ENCODE measurements at regions of chr10 and their contacts with region 1.

Region 1: DNA sequence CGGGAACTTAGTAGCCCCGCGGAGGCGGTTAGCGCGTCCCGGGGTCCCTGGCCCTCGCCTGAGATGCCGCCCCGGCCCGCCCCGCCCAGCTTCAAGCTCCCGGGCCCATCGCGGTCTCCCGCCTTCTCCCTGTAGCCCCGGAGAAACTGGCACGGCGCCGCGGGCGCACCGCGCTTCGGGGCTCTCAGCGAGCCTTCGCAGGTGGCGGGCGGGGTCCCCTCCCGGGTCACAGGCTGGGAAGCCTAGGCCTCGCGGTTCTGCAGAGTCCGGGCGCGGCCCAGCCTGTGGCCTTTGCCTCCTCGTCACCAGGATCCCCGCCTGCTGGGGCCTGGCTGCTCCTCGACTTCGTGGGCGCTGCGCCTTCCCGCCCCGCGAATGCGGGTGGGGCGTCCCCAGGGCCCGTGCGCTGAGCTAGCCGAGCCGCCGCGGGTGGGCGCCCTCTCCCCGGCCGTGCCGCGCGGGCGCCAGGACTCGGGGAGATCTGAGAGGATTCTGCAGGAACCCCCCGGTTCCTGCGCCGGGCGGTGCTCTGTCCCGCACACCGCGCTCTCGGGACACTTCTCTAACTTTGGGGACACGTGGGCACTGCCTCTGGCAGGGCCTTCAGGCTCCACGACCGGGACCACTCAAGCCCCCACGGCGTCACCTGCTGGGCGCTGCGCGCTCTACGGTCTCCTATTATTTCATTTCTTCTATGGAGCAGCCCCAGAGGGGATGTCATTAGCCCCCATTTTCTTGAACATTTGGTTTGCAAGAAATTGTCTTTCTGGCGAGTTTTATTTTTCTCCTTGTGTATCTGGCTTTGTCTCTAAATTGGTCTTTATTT is 682 bp upstream of the RGS10 start:
- DNase-seq: peak; percentile 60 to 67 (median 64)
- H3K4me3 ChIP-seq: peak overlapping the region in 1 of 2 donors; percentile 88
- H3K4me3 Mint-ChIP-seq: peak overlapping the region; percentile 94 to 98 (median 95)
- H3K27ac ChIP-seq: peak overlapping the region; percentile 57
- H3K27ac Mint-ChIP-seq: peak overlapping the region; percentile 83 to 96 (median 91)
- H3K4me1 ChIP-seq: peaks cover 42% of the 10 kb centered on the region
- H3K4me1 Mint-ChIP-seq: peaks cover 28 to 43% (median 38%) of the 10 kb centered on the region in 4 donors
- H3K27me3 ChIP-seq: no peaks in the 10 kb centered on the region
- H3K27me3 Mint-ChIP-seq: no peaks in the 10 kb centered on the region

Region 2: DNA sequence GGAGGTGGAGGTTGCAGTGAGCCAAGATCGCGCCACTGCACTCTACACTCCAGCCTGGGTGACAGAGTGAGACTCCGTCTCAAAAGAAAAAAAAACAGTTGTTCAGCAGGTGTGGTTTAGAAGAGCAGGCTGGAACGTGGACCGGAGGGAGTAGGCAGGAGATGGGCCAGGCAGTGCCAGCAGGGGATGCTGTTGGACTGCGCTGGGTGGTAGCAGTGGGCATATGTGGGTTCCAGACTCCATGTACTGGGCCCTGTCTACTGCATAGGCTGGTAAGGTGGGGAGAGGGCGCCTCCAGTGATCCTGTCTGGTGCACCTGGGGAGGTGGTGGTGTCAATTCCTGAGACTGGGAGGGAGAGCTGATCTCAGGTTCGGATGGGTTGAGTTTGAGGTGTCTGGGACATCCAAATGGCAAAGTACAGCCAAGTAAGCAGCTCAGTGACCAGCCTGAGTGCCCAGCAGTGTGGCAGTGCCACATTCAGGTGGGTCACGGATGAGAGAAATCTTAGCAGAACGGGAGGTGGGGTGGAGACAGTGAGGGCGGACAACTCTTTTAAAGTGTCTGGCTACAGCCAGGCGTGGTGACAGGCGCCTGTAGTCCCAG is 403.6 kb before region 1 on chr10:
- CTCF ChIA-PET with region 1: interaction called, 4 read pairs
- POLR2A ChIA-PET with region 1: no interaction called
- intact Hi-C with region 1: loop called (anchors 2 kb)
- DNase-seq: peak in 4 of 5 donors; percentile 34 to 45 (median 42)
- H3K4me3 ChIP-seq: no peak overlapping the region
- H3K4me3 Mint-ChIP-seq: no peak overlapping the region
- H3K27ac ChIP-seq: no peak overlapping the region
- H3K27ac Mint-ChIP-seq: peak overlapping the region in 6 of 7 donors; percentile 14 to 88 (median 64)
- H3K4me1 ChIP-seq: peaks cover 4% of the 10 kb centered on the region
- H3K4me1 Mint-ChIP-seq: peaks cover 5 to 10% (median 9%) of the 10 kb centered on the region in 4 donors
- H3K27me3 ChIP-seq: no peaks in the 10 kb centered on the region
- H3K27me3 Mint-ChIP-seq: no peaks in the 10 kb centered on the region

Region 3: GRCh38 chr10:119270762-119271366 is 272.3 kb before region 1 on chr10:
- CTCF ChIA-PET with region 1: interaction called, 4 read pairs
- POLR2A ChIA-PET with region 1: no interaction called
- intact Hi-C with region 1: loop called (anchors 1 kb)
- DNase-seq: peak in 3 of 5 donors; percentile 43 to 63 (median 58)
- H3K4me3 ChIP-seq: no peak overlapping the region
- H3K4me3 Mint-ChIP-seq: peak overlapping the region; percentile 45 to 80 (median 66)
- H3K27ac ChIP-seq: peak overlapping the region; percentile 93
- H3K27ac Mint-ChIP-seq: peak overlapping the region; percentile 96 to 100 (median 99)
- H3K4me1 ChIP-seq: peaks cover 69% of the 10 kb centered on the region
- H3K4me1 Mint-ChIP-seq: peaks cover 28 to 84% (median 65%) of the 10 kb centered on the region in 4 donors
- H3K27me3 ChIP-seq: no peaks in the 10 kb centered on the region
- H3K27me3 Mint-ChIP-seq: no peaks in the 10 kb centered on the region

Region 4: GRCh38 chr10:119348516-119349240 is 194.5 kb before region 1 on chr10:
- CTCF ChIA-PET with region 1: no interaction called
- POLR2A ChIA-PET with region 1: no interaction called
- intact Hi-C with region 1: no loop called
- DNase-seq: no peak
- H3K4me3 ChIP-seq: no peak overlapping the region
- H3K4me3 Mint-ChIP-seq: no peak overlapping the region
- H3K27ac ChIP-seq: no peak overlapping the region
- H3K27ac Mint-ChIP-seq: peak overlapping the region in 1 of 7 donors; percentile 75
- H3K4me1 ChIP-seq: no peaks in the 10 kb centered on the region
- H3K4me1 Mint-ChIP-seq: peaks cover 7 to 17% (median 13%) of the 10 kb centered on the region in 4 donors
- H3K27me3 ChIP-seq: no peaks in the 10 kb centered on the region
- H3K27me3 Mint-ChIP-seq: no peaks in the 10 kb centered on the region

Region 5: GRCh38 chr10:119478111-119478802 is 64.9 kb before region 1 on chr10:
- CTCF ChIA-PET with region 1: interaction called, 17 read pairs
- POLR2A ChIA-PET with region 1: interaction called, 12 read pairs
- intact Hi-C with region 1: no loop called
- DNase-seq: peak in 4 of 5 donors; percentile 33 to 45 (median 36)
- H3K4me3 ChIP-seq: peak overlapping the region in 1 of 2 donors; percentile 13
- H3K4me3 Mint-ChIP-seq: peak overlapping the region; percentile 26 to 85 (median 71)
- H3K27ac ChIP-seq: peak overlapping the region; percentile 11
- H3K27ac Mint-ChIP-seq: peak overlapping the region; percentile 64 to 90 (median 88)
- H3K4me1 ChIP-seq: peaks cover 30% of the 10 kb centered on the region
- H3K4me1 Mint-ChIP-seq: peaks cover 24 to 38% (median 30%) of the 10 kb centered on the region in 4 donors
- H3K27me3 ChIP-seq: no peaks in the 10 kb centered on the region
- H3K27me3 Mint-ChIP-seq: no peaks in the 10 kb centered on the region

Region 6: DNA sequence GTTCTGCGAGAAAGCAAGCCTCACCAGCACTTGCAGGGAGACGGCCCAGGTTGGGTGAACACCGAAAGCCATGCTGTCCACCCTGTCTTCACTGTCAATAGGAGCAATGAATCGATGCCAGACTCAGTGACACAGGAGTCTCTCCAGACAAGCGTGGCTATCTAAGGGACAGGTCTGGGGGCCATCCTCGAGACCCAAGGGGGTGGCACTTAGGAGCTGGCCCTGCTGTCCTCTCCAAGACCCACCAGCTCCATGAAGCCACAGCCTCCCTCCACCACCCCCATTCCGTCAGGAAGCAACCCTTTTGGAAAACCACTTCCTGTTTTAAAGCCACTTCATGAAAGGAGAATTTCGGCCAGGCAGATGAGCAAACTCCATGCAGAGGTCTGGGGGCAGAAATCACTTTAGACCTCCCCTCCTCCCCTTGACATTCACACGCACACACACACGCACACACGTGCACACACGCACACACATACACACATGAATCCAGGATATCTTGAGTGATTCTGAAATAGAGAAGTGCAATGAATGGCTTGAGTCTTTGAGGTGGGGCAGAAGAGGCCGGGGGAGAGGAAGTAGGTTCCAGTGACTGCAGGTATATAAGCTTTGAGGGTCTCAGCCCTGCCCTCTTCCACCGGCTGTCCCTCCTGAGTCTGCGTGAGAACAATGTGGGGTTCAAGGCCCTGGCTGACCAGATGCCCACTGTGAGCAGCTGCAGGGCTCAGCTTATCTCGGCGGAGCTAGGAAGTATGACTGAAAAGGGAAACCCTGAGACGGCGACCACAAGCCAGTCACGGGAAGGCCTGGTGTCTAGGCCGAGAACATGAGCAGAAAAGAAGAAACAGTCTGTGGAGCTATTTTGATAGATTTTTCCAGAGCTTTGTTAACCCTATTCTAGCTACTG is 25.7 kb before region 1 on chr10:
- CTCF ChIA-PET with region 1: interaction called, 57 read pairs
- POLR2A ChIA-PET with region 1: interaction called, 107 read pairs
- intact Hi-C with region 1: loop called (anchors 1 kb)
- DNase-seq: peak; percentile 27 to 78 (median 45)
- H3K4me3 ChIP-seq: peak overlapping the region; percentile 23 to 36
- H3K4me3 Mint-ChIP-seq: peak overlapping the region; percentile 50 to 82 (median 79)
- H3K27ac ChIP-seq: peak overlapping the region; percentile 70
- H3K27ac Mint-ChIP-seq: peak overlapping the region; percentile 88 to 97 (median 95)
- H3K4me1 ChIP-seq: peaks cover 60% of the 10 kb centered on the region
- H3K4me1 Mint-ChIP-seq: peaks cover 22 to 63% (median 47%) of the 10 kb centered on the region in 4 donors
- H3K27me3 ChIP-seq: no peaks in the 10 kb centered on the region
- H3K27me3 Mint-ChIP-seq: no peaks in the 10 kb centered on the region

Region 7: DNA sequence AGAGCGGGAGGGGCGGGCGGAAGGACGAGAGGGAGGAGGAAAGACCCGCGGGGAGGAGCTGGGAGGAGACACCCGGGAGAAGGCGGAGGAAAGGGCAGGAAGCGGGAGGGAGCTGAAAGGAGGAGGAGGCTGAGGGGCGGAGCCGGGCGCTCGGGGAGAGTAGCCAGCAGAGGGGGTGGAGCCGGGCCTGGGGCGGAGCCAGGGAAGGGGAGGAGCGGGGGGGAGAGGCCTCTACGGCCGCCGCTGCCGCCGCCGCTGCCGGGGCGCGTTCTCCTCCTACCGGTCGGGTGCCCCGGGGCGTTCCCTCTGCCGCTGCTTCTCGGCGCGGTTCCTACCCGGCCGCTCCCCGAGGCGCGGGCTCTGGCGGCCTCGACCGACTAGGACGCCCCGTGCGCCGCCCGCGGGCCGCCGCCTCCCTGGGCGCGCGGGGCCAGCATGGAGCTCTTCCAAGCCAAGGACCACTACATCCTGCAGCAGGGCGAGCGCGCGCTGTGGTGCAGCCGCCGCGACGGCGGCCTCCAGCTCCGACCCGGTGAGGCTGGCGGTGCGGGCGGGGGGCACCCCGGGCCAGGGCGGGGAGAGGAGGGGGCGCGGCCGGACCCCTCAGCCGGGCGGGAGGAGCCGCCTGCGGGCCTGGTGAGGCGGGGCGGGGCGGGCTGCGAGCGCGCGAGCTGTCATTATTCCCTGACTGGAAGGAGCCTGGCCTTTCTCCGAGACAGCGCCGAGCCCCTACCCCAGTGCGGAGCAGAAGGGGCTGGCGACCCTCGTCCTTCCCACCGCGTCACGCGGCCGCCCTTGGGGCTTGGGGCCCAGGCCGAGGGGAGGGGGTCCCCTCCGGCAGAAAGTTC is 182.9 kb after region 1 on chr10 and contains the start of gene INPP5F:
- CTCF ChIA-PET with region 1: interaction called, 3 read pairs
- POLR2A ChIA-PET with region 1: no interaction called
- intact Hi-C with region 1: loop called (anchors 2 kb)
- DNase-seq: peak; percentile 96 to 98 (median 97)
- H3K4me3 ChIP-seq: peak within 1 kb of the TSS; percentile 62 to 74
- H3K4me3 Mint-ChIP-seq: peak within 1 kb of the TSS; percentile 90 to 96 (median 92)
- H3K27ac ChIP-seq: peak within 1 kb of the TSS; percentile 53
- H3K27ac Mint-ChIP-seq: peak within 1 kb of the TSS; percentile 74 to 92 (median 91)
- H3K4me1 ChIP-seq: peaks cover 34% of the 10 kb centered on the region
- H3K4me1 Mint-ChIP-seq: peaks cover 27 to 37% (median 31%) of the 10 kb centered on the region in 4 donors
- H3K27me3 ChIP-seq: no peaks in the 10 kb centered on the region
- H3K27me3 Mint-ChIP-seq: no peaks in the 10 kb centered on the region
- total RNA-seq, gene INPP5F: 10.6 to 10.9 TPM

Measured in CD4-positive, alpha-beta memory T cell (primary cell).